ENCODE measurements at regions of chr10 and their contacts with region 1.

Region 1: GRCh38 chr10:121886997-121887622 is 40.7 kb downstream of the ATE1 start:
- DNase-seq: peak; percentile 68
- H3K4me3 Mint-ChIP-seq: no peak overlapping the region
- H3K27ac Mint-ChIP-seq: no peak overlapping the region
- H3K4me1 Mint-ChIP-seq: no peaks in the 10 kb centered on the region
- H3K27me3 Mint-ChIP-seq: no peaks in the 10 kb centered on the region

Region 2: GRCh38 chr10:120942806-120943413 is 944.2 kb before region 1 on chr10:
- CTCF ChIA-PET with region 1: interaction called, 11 read pairs
- POLR2A ChIA-PET with region 1: no interaction called
- intact Hi-C with region 1: loop called (anchors 2 kb)
- DNase-seq: peak; percentile 85
- H3K4me3 Mint-ChIP-seq: no peak overlapping the region
- H3K27ac Mint-ChIP-seq: no peak overlapping the region
- H3K4me1 Mint-ChIP-seq: peaks cover 5% of the 10 kb centered on the region
- H3K27me3 Mint-ChIP-seq: peaks cover 10% of the 10 kb centered on the region

Region 3: GRCh38 chr10:120948889-120949608 is 938.1 kb before region 1 on chr10:
- CTCF ChIA-PET with region 1: interaction called, 15 read pairs
- POLR2A ChIA-PET with region 1: no interaction called
- intact Hi-C with region 1: no loop called
- DNase-seq: peak; percentile 74
- H3K4me3 Mint-ChIP-seq: peak overlapping the region; percentile 20
- H3K27ac Mint-ChIP-seq: no peak overlapping the region
- H3K4me1 Mint-ChIP-seq: peaks cover 7% of the 10 kb centered on the region
- H3K27me3 Mint-ChIP-seq: peaks cover 33% of the 10 kb centered on the region

Region 4: GRCh38 chr10:121734589-121735045 is 152.5 kb before region 1 on chr10:
- CTCF ChIA-PET with region 1: no interaction called
- POLR2A ChIA-PET with region 1: no interaction called
- intact Hi-C with region 1: loop called (anchors 5 kb)
- DNase-seq: no peak
- H3K4me3 Mint-ChIP-seq: no peak overlapping the region
- H3K27ac Mint-ChIP-seq: no peak overlapping the region
- H3K4me1 Mint-ChIP-seq: peaks cover 6% of the 10 kb centered on the region
- H3K27me3 Mint-ChIP-seq: peaks cover 36% of the 10 kb centered on the region

Region 5: GRCh38 chr10:121823993-121824463 is 63.1 kb before region 1 on chr10:
- CTCF ChIA-PET with region 1: interaction called, 42 read pairs
- POLR2A ChIA-PET with region 1: no interaction called
- intact Hi-C with region 1: loop called (anchors 1 kb)
- DNase-seq: no peak
- H3K4me3 Mint-ChIP-seq: no peak overlapping the region
- H3K27ac Mint-ChIP-seq: no peak overlapping the region
- H3K4me1 Mint-ChIP-seq: peaks cover 8% of the 10 kb centered on the region
- H3K27me3 Mint-ChIP-seq: no peaks in the 10 kb centered on the region

Region 6: DNA sequence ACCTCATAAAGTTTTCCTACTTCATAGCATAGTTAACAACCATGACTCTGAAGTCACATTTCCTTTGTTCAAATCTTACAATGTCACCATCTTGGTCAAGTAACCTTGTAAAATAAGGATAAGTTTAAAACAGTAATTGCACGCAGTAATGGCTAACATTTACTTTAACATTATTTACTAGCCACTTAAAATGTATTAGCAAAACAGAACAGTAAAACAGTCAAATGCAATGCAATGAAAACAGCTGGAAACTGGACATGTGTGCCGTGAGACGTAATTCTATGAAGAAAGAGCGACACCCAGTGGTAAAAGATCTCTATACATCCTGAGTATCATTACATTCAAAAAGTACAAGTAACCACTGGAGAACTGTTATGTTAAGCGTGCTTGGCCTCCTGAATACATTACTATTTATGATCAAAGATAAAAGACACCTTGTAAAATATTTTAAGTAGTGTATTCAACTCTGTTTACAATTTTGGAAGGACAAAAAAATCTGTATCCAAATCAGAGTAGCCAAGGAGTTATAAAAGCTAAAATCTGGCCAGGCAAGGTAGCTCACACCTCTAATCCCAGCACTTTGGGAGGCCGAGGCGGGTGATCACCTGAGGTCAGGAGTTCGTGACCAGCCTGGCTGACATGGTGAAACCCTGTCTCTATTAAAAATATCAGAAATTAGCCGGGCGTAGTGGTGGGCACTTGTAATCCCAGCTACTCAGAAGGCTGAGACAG is 13.5 kb after region 1 on chr10:
- CTCF ChIA-PET with region 1: interaction called, 14 read pairs
- POLR2A ChIA-PET with region 1: no interaction called
- intact Hi-C with region 1: no loop called
- DNase-seq: no peak
- H3K4me3 Mint-ChIP-seq: no peak overlapping the region
- H3K27ac Mint-ChIP-seq: no peak overlapping the region
- H3K4me1 Mint-ChIP-seq: no peaks in the 10 kb centered on the region
- H3K27me3 Mint-ChIP-seq: no peaks in the 10 kb centered on the region

Measured in activated CD4-positive, alpha-beta memory T cell treated with anti-CD3 and anti-CD28 coated beads for 36 hours (primary cell).